A549 (cell line): ENCODE measurements at regions of chr19 and their contacts with region 1.

Region 1: GRCh38 chr19:39052243-39052746 is 19.9 kb upstream of the FBXO27 start:
- DNase-seq: peak; percentile 75 to 87
- ATAC-seq: peak; percentile 85 to 96
- H3K4me3 ChIP-seq: no peak overlapping the region
- H3K27ac ChIP-seq: peak overlapping the region; percentile 54 to 71
- H3K4me1 ChIP-seq: peaks cover 22% of the 10 kb centered on the region
- CTCF ChIP-seq: peak; percentile 99
- EP300 ChIP-seq: no peak
- POLR2A ChIP-seq: no peak
- RAD21 ChIP-seq: peak; percentile 98 to 99

Region 2: GRCh38 chr19:38142176-38143035 is 909.9 kb before region 1 on chr19:
- CTCF ChIA-PET with region 1: no interaction called
- POLR2A ChIA-PET with region 1: no interaction called
- DNase-seq: peak; percentile 81 to 98
- ATAC-seq: peak; percentile 84 to 90
- H3K4me3 ChIP-seq: no peak overlapping the region
- H3K27ac ChIP-seq: no peak overlapping the region
- H3K4me1 ChIP-seq: no peaks in the 10 kb centered on the region
- CTCF ChIP-seq: peak; percentile 86
- EP300 ChIP-seq: no peak
- POLR2A ChIP-seq: no peak
- RAD21 ChIP-seq: peak; percentile 73 to 91

Region 3: GRCh38 chr19:38917516-38918491 is 134.5 kb before region 1 on chr19:
- CTCF ChIA-PET with region 1: no interaction called
- POLR2A ChIA-PET with region 1: no interaction called
- DNase-seq: peak; percentile 75 to 90
- ATAC-seq: peak; percentile 72 to 84
- H3K4me3 ChIP-seq: no peak overlapping the region
- H3K27ac ChIP-seq: peak overlapping the region in 1 of 2 experiments; percentile 14; a peak in 1 of 6 replicates
- H3K4me1 ChIP-seq: 0 out of 3 replicates have a peak, but pooled peaks cover 5% of the 10 kb centered on the region
- CTCF ChIP-seq: peak; percentile 49
- EP300 ChIP-seq: no peak
- POLR2A ChIP-seq: no peak
- RAD21 ChIP-seq: peak; percentile 48 to 59

Region 4: GRCh38 chr19:38989066-38989605 is 63.2 kb before region 1 on chr19:
- CTCF ChIA-PET with region 1: interaction called, 21 read pairs
- POLR2A ChIA-PET with region 1: no interaction called
- DNase-seq: peak in 1 of 2 experiments; percentile 55
- ATAC-seq: peak; percentile 72 to 76
- H3K4me3 ChIP-seq: no peak overlapping the region
- H3K27ac ChIP-seq: peak overlapping the region; percentile 21 to 71; a peak in 3 of 6 replicates
- H3K4me1 ChIP-seq: peaks cover 37% of the 10 kb centered on the region
- CTCF ChIP-seq: no peak
- EP300 ChIP-seq: no peak
- POLR2A ChIP-seq: no peak
- RAD21 ChIP-seq: no peak

Region 5: DNA sequence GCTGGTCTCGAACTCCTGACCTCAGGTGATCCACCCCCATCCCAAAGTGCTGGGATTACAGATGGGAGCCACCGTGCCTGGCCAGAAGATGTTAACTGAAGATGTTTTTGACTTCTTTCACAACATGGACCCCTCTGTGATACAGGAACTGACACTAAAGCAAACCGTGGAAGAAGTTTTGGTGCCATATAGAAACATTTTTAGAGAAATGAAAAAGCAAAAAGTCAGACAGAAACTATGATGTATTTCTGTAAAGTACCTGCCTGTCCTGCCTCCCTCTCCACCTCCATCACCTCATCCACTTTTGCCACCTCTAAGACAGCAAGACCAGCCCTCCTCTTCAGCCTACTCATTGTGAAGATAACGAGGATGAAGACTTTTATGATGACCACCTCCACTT is 31.2 kb before region 1 on chr19:
- CTCF ChIA-PET with region 1: interaction called, 18 read pairs
- POLR2A ChIA-PET with region 1: no interaction called
- DNase-seq: no peak
- ATAC-seq: no peak
- H3K4me3 ChIP-seq: no peak overlapping the region
- H3K27ac ChIP-seq: no peak overlapping the region
- H3K4me1 ChIP-seq: no peaks in the 10 kb centered on the region
- CTCF ChIP-seq: no peak
- EP300 ChIP-seq: no peak
- POLR2A ChIP-seq: no peak
- RAD21 ChIP-seq: no peak

Region 6: GRCh38 chr19:39104186-39104596 is 51.9 kb after region 1 on chr19:
- CTCF ChIA-PET with region 1: interaction called, 144 read pairs
- POLR2A ChIA-PET with region 1: no interaction called
- DNase-seq: no peak
- ATAC-seq: no peak
- H3K4me3 ChIP-seq: no peak overlapping the region
- H3K27ac ChIP-seq: peak overlapping the region in 1 of 2 experiments; percentile 33; a peak in 3 of 6 replicates
- H3K4me1 ChIP-seq: peaks cover 12% of the 10 kb centered on the region; the same call in 2 of the 3 replicates
- CTCF ChIP-seq: no peak
- EP300 ChIP-seq: no peak
- POLR2A ChIP-seq: no peak
- RAD21 ChIP-seq: no peak

Region 7: GRCh38 chr19:39144245-39145071 is 92.2 kb after region 1 on chr19:
- CTCF ChIA-PET with region 1: interaction called, 13 read pairs
- POLR2A ChIA-PET with region 1: no interaction called
- DNase-seq: no peak
- ATAC-seq: peak; percentile 45 to 65
- H3K4me3 ChIP-seq: no peak overlapping the region
- H3K27ac ChIP-seq: peak overlapping the region in 1 of 2 experiments; percentile 53; a peak in 3 of 6 replicates
- H3K4me1 ChIP-seq: peaks cover 30% of the 10 kb centered on the region
- CTCF ChIP-seq: no peak
- EP300 ChIP-seq: no peak
- POLR2A ChIP-seq: no peak
- RAD21 ChIP-seq: no peak

Region 8: GRCh38 chr19:39182174-39182505 is 129.8 kb after region 1 on chr19:
- CTCF ChIA-PET with region 1: interaction called, 21 read pairs
- POLR2A ChIA-PET with region 1: no interaction called
- DNase-seq: no peak
- ATAC-seq: peak; percentile 6 to 20; a peak in 4 of 6 replicates
- H3K4me3 ChIP-seq: no peak overlapping the region
- H3K27ac ChIP-seq: peak overlapping the region in 1 of 2 experiments; percentile 9; a peak in 2 of 6 replicates
- H3K4me1 ChIP-seq: no peaks in the 10 kb centered on the region
- CTCF ChIP-seq: no peak
- EP300 ChIP-seq: no peak
- POLR2A ChIP-seq: no peak
- RAD21 ChIP-seq: no peak